ENCODE measurements at regions of chr5 and their contacts with region 1.

Region 1: DNA sequence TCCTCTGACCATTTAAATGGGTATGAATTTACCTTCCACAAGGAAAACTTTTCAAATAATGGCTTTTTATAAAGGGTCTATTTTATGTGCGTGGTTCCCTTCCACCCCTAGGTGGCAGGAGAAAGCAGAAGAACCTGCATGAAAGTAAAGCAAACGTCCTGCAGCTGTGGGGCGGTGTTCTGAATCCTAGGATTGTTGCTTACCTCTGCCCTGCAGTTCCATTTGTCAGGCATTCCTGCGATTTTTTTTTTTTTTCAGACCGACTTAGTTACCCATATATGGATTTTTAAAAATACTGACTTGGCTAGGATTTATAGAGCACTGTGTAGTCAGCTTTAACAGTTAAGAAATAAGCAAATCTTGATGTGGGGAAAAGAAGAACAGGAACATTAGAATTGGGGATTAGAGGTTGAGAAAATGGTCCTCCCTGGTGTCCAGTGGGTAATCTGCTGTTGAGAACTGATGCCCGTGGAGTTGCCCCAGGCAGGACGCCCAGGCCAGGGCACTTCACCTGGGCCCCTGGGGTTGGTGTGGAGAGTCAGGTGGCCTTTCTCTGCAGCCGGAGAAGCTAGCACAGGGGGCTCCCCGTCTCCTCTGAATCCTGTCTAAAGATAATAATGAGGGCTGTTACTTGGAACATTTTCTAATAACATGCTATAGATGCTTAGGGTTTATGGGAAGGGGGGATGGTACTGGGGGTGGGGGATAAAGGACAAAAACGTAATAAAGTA is 30.4 kb upstream of the LTC4S start:
- DNase-seq: peak in 8 of 9 experiments; percentile 24 to 78 (median 56)
- ATAC-seq: peak; percentile 81
- H3K4me3 ChIP-seq: no peak overlapping the region
- H3K4me3 Mint-ChIP-seq: no peak overlapping the region
- H3K27ac ChIP-seq: no peak overlapping the region
- H3K27ac Mint-ChIP-seq: no peak overlapping the region
- H3K4me1 ChIP-seq: peaks cover 14% of the 10 kb centered on the region
- H3K4me1 Mint-ChIP-seq: peaks cover 57% of the 10 kb centered on the region
- H3K27me3 ChIP-seq: no peaks in the 10 kb centered on the region
- H3K27me3 Mint-ChIP-seq: no peaks in the 10 kb centered on the region
- CTCF ChIP-seq: peak; percentile 97

Region 2: DNA sequence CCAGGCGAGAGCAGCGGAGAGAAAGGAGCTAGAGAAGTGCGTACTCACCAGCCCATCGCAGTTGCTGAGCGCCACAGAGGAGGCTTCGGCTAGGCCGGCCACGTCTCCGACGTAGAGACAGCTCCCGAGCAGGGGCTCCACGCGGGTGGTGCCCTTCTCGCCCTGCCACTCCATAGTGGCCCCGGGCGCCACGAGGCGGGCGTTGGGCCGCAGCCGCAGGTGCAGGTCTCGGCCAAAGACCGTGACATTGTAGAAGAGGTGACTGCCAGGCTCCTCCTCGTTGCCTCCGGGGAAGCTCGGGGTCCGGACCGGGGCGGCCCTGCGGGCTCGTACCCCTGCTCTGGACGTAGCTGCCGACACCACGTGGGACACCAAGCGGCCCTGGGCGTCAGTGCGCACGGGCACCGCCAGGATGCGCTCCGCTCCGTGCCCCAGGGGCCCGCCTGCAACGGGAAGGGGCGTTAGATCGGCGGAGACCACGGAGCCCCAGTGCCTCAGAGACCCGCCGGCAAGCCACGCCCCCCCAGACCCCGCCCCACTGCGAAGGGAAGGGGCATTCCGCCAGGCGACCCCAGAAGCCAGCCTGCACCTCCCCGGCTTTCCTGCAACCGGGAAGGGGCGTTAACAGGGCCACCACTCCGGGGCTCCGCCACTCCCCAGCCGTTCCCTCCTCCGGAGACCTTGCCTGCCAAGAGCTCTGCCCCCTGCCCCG is 419.5 kb before region 1 on chr5:
- CTCF ChIA-PET with region 1: no interaction called
- POLR2A ChIA-PET with region 1: no interaction called
- intact Hi-C with region 1: no loop called
- DNase-seq: no peak
- ATAC-seq: no peak
- H3K4me3 ChIP-seq: no peak overlapping the region
- H3K4me3 Mint-ChIP-seq: peak overlapping the region; percentile 50
- H3K27ac ChIP-seq: no peak overlapping the region
- H3K27ac Mint-ChIP-seq: no peak overlapping the region
- H3K4me1 ChIP-seq: peaks cover 6% of the 10 kb centered on the region
- H3K4me1 Mint-ChIP-seq: peaks cover 14% of the 10 kb centered on the region
- H3K27me3 ChIP-seq: peaks cover 3 to 10% of the 10 kb centered on the region in 2 experiments
- H3K27me3 Mint-ChIP-seq: peaks cover 42% of the 10 kb centered on the region
- CTCF ChIP-seq: no peak

Region 3: DNA sequence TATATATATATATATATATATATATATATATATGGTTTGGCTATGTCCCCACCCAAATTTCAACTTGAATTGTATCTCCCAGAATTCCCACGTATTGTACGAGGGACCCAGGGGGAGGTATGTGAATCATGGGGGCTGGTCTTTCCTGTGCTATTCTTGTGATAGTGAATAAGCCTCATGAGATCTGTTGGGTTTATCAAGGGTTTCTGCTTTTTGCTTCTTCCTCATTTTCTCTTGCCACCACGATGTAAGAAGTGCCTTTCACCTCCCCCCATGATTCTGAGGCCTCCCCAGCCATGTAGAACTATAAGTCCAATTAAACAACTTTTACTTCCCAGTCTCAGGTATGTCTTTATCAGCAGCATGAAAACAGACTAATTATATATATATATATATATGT is 365.9 kb before region 1 on chr5:
- CTCF ChIA-PET with region 1: no interaction called
- POLR2A ChIA-PET with region 1: no interaction called
- intact Hi-C with region 1: no loop called
- DNase-seq: no peak
- ATAC-seq: no peak
- H3K4me3 ChIP-seq: no peak overlapping the region
- H3K4me3 Mint-ChIP-seq: no peak overlapping the region
- H3K27ac ChIP-seq: no peak overlapping the region
- H3K27ac Mint-ChIP-seq: no peak overlapping the region
- H3K4me1 ChIP-seq: no peaks in the 10 kb centered on the region
- H3K4me1 Mint-ChIP-seq: no peaks in the 10 kb centered on the region
- H3K27me3 ChIP-seq: no peaks in the 10 kb centered on the region
- H3K27me3 Mint-ChIP-seq: peaks cover 4% of the 10 kb centered on the region
- CTCF ChIP-seq: no peak

Region 4: GRCh38 chr5:179732417-179732917 is 30.9 kb before region 1 on chr5 and contains the start of gene MAML1:
- CTCF ChIA-PET with region 1: interaction called, 13 read pairs
- POLR2A ChIA-PET with region 1: interaction called, 3 read pairs
- intact Hi-C with region 1: no loop called
- DNase-seq: peak; percentile 98 to 100 (median 99)
- ATAC-seq: peak; percentile 93
- H3K4me3 ChIP-seq: peak within 1 kb of the TSS; percentile 52 to 76
- H3K4me3 Mint-ChIP-seq: peak within 1 kb of the TSS; percentile 95
- H3K27ac ChIP-seq: peak within 1 kb of the TSS; percentile 62 to 91
- H3K27ac Mint-ChIP-seq: peak within 1 kb of the TSS; percentile 97
- H3K4me1 ChIP-seq: peaks cover 28% of the 10 kb centered on the region
- H3K4me1 Mint-ChIP-seq: peaks cover 40% of the 10 kb centered on the region
- H3K27me3 ChIP-seq: no peaks in the 10 kb centered on the region
- H3K27me3 Mint-ChIP-seq: no peaks in the 10 kb centered on the region
- CTCF ChIP-seq: no peak
- total RNA-seq, gene MAML1: 23.4 to 26.9 TPM

Region 5: GRCh38 chr5:179749857-179750508 is 13.4 kb before region 1 on chr5:
- CTCF ChIA-PET with region 1: interaction called, 13 read pairs
- POLR2A ChIA-PET with region 1: no interaction called
- intact Hi-C with region 1: no loop called
- DNase-seq: no peak
- ATAC-seq: no peak
- H3K4me3 ChIP-seq: no peak overlapping the region
- H3K4me3 Mint-ChIP-seq: no peak overlapping the region
- H3K27ac ChIP-seq: no peak overlapping the region
- H3K27ac Mint-ChIP-seq: no peak overlapping the region
- H3K4me1 ChIP-seq: peaks cover 18% of the 10 kb centered on the region
- H3K4me1 Mint-ChIP-seq: peaks cover 48% of the 10 kb centered on the region
- H3K27me3 ChIP-seq: no peaks in the 10 kb centered on the region
- H3K27me3 Mint-ChIP-seq: no peaks in the 10 kb centered on the region
- CTCF ChIP-seq: no peak

Region 6: DNA sequence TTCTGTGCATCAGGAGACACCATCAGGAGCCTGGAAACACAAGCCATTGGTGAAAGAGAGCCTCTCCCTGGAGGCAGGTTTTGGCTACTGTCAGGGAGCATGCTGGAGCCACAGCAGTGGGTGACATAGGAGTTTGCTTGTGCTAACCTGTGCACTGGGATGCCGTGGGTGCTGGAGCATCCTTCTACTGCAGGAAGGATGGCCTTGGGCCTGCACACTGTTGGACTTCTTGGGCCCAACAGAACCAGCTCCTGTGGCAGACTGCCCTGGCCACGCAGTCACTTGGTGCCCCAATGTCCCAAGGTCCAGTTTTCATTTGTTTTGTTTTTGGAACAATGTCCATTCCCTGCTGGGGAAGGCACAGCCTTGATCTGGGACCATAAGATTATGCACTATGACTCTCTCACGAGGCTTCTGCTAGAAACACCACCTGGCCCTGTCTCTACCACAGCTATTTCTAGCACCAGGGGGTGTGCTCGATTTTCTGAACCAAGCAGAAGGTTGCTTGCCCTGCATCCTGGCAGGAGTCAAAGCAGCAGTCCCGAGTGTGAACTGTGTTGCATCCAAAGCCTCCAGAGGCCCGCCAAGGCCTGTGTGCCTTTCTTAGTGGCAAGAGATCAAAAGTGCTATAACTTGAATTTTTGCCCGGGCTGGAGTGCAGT is 24.9 kb after region 1 on chr5:
- CTCF ChIA-PET with region 1: interaction called, 53 read pairs
- POLR2A ChIA-PET with region 1: no interaction called
- intact Hi-C with region 1: no loop called
- DNase-seq: no peak
- ATAC-seq: no peak
- H3K4me3 ChIP-seq: no peak overlapping the region
- H3K4me3 Mint-ChIP-seq: no peak overlapping the region
- H3K27ac ChIP-seq: no peak overlapping the region
- H3K27ac Mint-ChIP-seq: no peak overlapping the region
- H3K4me1 ChIP-seq: peaks cover 4% of the 10 kb centered on the region
- H3K4me1 Mint-ChIP-seq: peaks cover 4% of the 10 kb centered on the region
- H3K27me3 ChIP-seq: no peaks in the 10 kb centered on the region
- H3K27me3 Mint-ChIP-seq: no peaks in the 10 kb centered on the region
- CTCF ChIP-seq: no peak

Region 7: DNA sequence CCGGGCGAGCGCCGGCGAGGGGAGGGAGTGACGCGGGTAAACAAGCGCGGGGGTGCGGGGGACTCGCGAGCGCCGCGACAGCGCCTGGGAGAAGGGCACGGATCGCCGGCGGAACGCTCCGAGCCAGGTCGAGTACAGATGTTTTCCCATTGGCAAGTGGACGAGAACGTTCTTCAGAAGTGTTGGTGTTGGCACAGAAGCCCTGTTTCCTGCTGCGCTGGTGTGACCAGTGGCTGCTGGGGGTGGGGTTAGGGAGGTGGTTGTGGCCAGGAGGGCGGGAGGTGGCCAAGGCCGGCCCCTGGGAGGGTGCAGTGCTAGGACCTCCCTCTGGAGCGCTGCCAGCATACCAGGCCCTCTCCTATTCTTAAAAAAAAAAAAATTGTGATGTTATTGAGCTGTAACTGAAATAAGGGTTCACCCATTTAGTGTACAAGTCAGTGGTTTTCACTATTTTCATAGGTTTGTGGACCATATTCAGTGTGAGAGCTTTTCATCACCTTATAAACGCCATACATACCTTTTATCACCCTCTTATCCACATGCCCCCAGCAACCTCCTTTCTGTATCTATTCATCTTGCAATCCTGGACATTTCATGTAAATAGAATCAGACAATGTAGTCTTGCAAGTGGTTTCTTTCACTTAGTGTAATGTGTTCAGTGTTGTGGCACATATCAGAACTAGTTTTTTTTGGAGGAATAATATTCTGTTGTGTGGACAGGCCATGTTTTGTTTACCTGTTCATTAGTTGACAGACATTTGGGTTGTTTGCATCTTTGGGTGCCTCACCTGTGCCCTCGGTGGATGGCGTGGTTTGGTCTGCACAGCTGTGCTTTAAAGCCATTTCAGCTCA is 58.4 kb after region 1 on chr5:
- CTCF ChIA-PET with region 1: interaction called, 4 read pairs
- POLR2A ChIA-PET with region 1: interaction called, 4 read pairs
- intact Hi-C with region 1: loop called in 1 of 2 experiments (anchors 1 kb)
- DNase-seq: peak; percentile 79 to 94 (median 88)
- ATAC-seq: peak; percentile 63
- H3K4me3 ChIP-seq: peak overlapping the region; percentile 81 to 94
- H3K4me3 Mint-ChIP-seq: peak overlapping the region; percentile 95
- H3K27ac ChIP-seq: peak overlapping the region; percentile 92 to 99
- H3K27ac Mint-ChIP-seq: peak overlapping the region; percentile 96
- H3K4me1 ChIP-seq: peaks cover 47% of the 10 kb centered on the region
- H3K4me1 Mint-ChIP-seq: peaks cover 59% of the 10 kb centered on the region
- H3K27me3 ChIP-seq: peaks cover 0 to 2% of the 10 kb centered on the region in 2 experiments
- H3K27me3 Mint-ChIP-seq: no peaks in the 10 kb centered on the region
- CTCF ChIP-seq: no peak

Region 8: DNA sequence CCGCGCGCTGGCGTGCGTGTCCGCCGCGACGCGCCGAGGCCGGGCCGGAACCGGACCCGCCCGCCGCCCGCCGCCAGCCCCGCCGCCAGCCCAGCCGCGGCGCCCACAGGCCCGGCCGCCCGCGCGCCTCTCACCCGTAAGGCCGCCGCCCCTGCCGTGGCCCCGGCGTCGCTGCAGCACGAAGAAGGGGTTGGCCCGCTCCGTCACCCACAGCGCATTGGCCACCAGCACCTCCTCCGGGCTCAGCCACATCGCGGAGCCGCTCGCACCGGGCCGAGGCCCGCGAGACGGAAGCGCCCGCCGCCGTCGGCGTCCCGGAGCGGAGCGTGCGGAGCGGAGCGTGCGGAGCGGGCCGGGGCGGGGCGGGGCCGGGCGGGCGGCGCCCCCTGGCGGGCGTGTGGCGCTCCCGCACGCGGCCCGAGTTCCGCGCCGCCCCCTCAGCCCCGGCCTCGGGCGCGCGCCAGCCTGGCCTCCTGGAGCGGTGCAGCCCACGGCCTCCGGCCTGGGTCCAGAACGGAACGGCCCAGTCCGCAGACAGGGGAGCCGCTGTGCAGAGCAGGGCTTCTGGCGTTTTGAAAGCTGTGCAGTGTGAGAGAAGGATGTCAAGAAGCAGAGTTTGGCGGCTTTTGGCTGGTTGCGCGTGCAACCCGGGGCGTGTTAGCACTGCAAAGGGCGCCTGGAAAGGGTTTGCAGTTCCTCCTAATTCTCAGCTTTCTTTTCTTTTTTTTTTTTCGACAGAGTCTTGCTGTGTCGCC is 144.4 kb after region 1 on chr5 and contains the start of gene TBC1D9B:
- CTCF ChIA-PET with region 1: interaction called, 9 read pairs
- POLR2A ChIA-PET with region 1: no interaction called
- intact Hi-C with region 1: loop called (anchors 1 kb)
- DNase-seq: peak; percentile 37 to 90 (median 67)
- ATAC-seq: peak; percentile 90
- H3K4me3 ChIP-seq: peak within 1 kb of the TSS; percentile 52 to 57
- H3K4me3 Mint-ChIP-seq: peak within 1 kb of the TSS; percentile 86
- H3K27ac ChIP-seq: peak within 1 kb of the TSS in 1 of 2 experiments; percentile 54
- H3K27ac Mint-ChIP-seq: peak within 1 kb of the TSS; percentile 79
- H3K4me1 ChIP-seq: peaks cover 17% of the 10 kb centered on the region
- H3K4me1 Mint-ChIP-seq: peaks cover 15% of the 10 kb centered on the region
- H3K27me3 ChIP-seq: no peaks in the 10 kb centered on the region
- H3K27me3 Mint-ChIP-seq: no peaks in the 10 kb centered on the region
- CTCF ChIP-seq: peak; percentile 14
- total RNA-seq, gene TBC1D9B: 39.7 to 48.1 TPM